Sigmoid colon (tissue), 7 donors: ENCODE measurements at regions of chr14 and their contacts with region 1.

Region 1: DNA sequence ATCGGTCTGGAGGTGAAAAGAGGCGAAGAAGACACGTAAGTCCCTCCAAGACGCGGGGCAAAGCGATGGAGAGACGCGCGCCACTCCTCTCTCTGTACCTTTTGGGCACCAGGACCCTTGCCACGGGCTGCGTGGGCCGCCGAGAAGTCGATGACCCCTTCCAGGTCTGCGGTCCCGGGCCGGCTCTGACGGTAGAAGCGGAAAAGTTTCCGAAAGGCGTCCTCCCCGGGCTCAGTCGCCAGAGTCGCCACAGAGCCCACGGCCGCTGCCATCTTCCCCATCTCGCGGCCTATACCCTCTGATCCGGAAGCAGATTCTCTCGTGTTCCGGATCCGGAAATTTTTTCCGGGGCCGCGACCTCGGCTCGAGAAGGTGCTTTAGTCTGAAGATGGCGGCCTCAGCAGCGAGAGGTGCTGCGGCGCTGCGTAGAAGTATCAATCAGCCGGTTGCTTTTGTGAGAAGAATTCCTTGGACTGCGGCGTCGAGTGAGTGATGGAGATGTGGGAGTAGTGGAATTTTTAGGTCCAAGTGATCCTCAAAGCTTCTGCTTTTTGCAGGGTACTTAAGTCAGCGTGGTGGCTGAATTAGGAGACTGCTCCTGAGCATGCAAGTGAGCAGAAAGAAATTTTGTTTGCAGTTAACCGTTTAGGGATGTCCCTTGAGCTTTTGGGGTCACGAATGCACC is at the starts of genes ALKBH1 and SLIRP:
- DNase-seq: peak; percentile 92
- H3K4me3 ChIP-seq: peak within 1 kb of the TSS; percentile 86 to 98 (median 95)
- H3K27ac ChIP-seq: peak within 1 kb of the TSS; percentile 71 to 84 (median 82)
- H3K4me1 ChIP-seq: peaks cover 0 to 38% (median 30%) of the 10 kb centered on the region in 4 donors
- H3K27me3 ChIP-seq: no peaks in the 10 kb centered on the region
- CTCF ChIP-seq: no peak
- EP300 ChIP-seq: peak in 1 of 4 donors; percentile 2
- POLR2A ChIP-seq: peak; percentile 48 to 66
- total RNA-seq, gene ALKBH1: 5.4 to 14.6 (median 10.8) TPM
- total RNA-seq, gene SLIRP: 152 to 650 (median 375) TPM

Region 2: DNA sequence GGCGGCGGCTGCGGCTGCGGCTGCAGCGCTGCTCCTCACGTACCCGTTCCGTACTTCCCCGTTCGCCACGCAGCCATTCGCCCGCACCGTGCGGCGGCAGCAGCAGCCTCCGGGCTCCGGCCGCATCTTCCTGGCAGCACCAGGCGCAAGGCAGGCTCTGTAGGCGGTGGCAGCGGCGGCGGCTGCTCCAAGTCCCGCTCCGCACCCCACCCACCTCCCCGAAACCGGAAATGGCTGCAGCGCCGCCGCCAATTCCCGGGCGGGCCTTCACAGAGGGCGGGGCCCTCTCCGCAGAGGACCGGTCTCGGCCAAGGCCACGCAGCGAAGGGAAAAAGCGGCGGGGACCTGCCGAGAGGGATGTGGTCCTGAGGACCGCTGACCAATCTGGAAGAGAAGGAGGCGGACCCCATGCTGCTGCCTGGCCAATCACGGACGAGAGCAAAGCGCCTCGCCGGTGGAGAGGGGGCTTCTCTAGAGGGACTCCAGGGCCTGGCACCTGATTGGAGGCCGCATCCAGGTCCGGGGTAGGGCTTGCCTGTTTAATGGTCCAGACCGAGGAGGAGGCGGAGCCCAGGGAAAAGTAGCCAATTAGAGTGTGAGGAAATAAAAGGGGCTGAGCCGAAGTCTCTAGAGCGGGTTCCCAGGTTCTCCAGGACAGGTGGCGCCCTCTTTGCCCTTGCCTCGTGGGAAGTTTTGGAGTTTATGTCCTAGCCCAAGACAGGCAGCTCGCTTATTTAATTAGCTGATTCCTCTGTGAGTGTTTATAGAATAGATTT is 91.2 kb before region 1 on chr14 and contains the start of gene SPTLC2:
- intact Hi-C with region 1: loop called (anchors 2 kb)
- DNase-seq: peak; percentile 100
- H3K4me3 ChIP-seq: peak within 1 kb of the TSS; percentile 47 to 90 (median 81)
- H3K27ac ChIP-seq: peak within 1 kb of the TSS; percentile 82 to 85 (median 84)
- H3K4me1 ChIP-seq: peaks cover 0 to 20% (median 12%) of the 10 kb centered on the region in 4 donors
- H3K27me3 ChIP-seq: no peaks in the 10 kb centered on the region
- CTCF ChIP-seq: no peak
- EP300 ChIP-seq: no peak
- POLR2A ChIP-seq: peak; percentile 26 to 76
- total RNA-seq, gene SPTLC2: 12.4 to 16.5 (median 15.5) TPM

Region 3: GRCh38 chr14:77660754-77661153 is 47.1 kb before region 1 on chr14:
- intact Hi-C with region 1: loop called (anchors 1 kb)
- DNase-seq: no peak
- H3K4me3 ChIP-seq: no peak overlapping the region
- H3K27ac ChIP-seq: no peak overlapping the region
- H3K4me1 ChIP-seq: no peaks in the 10 kb centered on the region
- H3K27me3 ChIP-seq: no peaks in the 10 kb centered on the region
- CTCF ChIP-seq: no peak
- EP300 ChIP-seq: no peak
- POLR2A ChIP-seq: no peak